Activated T-helper 1 cell treated with anti-CD3 and anti-CD28 coated beads, Interleukin-12 subunit alpha, Interleukin-12 subunit beta, Interleukin-2, Interleukin-4 antibody, amounts not matched to agents 30 ng/mL and 10 ng/mL and 1 ng/mL, durations not matched to agents 14 hours and 24 hours and 36 hours (primary cell): ENCODE measurements at regions of chr2 and their contacts with region 1.

Region 1: GRCh38 chr2:12416600-12416999 is 300.1 kb upstream of the TRIB2 start:
- DNase-seq: peak; percentile 41
- H3K4me3 Mint-ChIP-seq: no peak overlapping the region
- H3K27ac Mint-ChIP-seq: no peak overlapping the region
- H3K4me1 Mint-ChIP-seq: peaks cover 65% of the 10 kb centered on the region
- H3K27me3 Mint-ChIP-seq: peaks cover 2% of the 10 kb centered on the region

Region 2: GRCh38 chr2:11743846-11744553 is 672.6 kb before region 1 on chr2:
- intact Hi-C with region 1: loop called (anchors 10 kb)
- DNase-seq: peak; percentile 67
- H3K4me3 Mint-ChIP-seq: peak overlapping the region; percentile 0
- H3K27ac Mint-ChIP-seq: peak overlapping the region; percentile 79
- H3K4me1 Mint-ChIP-seq: peaks cover 55% of the 10 kb centered on the region
- H3K27me3 Mint-ChIP-seq: peaks cover 3% of the 10 kb centered on the region

Region 3: DNA sequence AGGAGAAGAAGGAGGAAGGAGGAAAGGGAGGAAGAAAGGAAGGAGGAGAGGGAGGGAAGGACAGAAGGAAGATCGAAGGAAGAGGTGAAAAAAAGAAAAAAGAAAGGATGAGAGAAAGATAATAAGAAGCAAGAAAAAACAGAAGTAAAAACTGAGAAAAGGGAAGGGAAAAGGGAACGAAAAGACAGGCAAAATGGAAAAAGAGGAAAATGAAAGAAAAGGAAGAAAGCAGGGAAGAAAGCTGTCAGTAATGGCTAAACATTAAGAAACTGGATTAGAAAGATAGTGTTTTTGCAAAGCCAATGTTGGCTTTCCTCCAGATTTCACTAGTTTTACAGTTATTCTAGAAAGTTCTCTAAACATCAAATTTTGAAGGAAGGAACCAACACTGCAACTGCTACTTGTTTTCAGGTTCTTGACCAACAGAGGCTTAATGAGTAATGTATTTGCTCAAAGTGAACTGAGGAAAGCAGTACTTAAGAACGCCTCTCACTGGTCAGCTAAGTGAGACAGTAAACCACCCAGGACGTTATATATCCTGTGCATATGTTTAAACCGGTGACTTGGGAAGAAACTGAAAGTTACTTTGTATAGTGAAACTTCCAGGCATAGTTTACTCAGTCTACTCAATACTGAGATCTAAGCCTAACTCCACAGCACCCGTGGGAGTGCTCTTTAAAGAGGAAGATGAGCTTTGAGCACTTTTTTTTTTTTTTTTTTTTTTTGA is 14.0 kb after region 1 on chr2:
- intact Hi-C with region 1: loop called (anchors 1 kb)
- DNase-seq: peak; percentile 8
- H3K4me3 Mint-ChIP-seq: peak overlapping the region; percentile 58
- H3K27ac Mint-ChIP-seq: peak overlapping the region; percentile 74
- H3K4me1 Mint-ChIP-seq: peaks cover 55% of the 10 kb centered on the region
- H3K27me3 Mint-ChIP-seq: no peaks in the 10 kb centered on the region

Region 4: GRCh38 chr2:12856934-12857601 is 440.5 kb after region 1 on chr2:
- intact Hi-C with region 1: loop called (anchors 5 kb)
- DNase-seq: peak; percentile 26
- H3K4me3 Mint-ChIP-seq: no peak overlapping the region
- H3K27ac Mint-ChIP-seq: no peak overlapping the region
- H3K4me1 Mint-ChIP-seq: peaks cover 18% of the 10 kb centered on the region
- H3K27me3 Mint-ChIP-seq: no peaks in the 10 kb centered on the region

Region 5: GRCh38 chr2:13006829-13007717 is 590.5 kb after region 1 on chr2:
- intact Hi-C with region 1: loop called (anchors 5 kb)
- DNase-seq: peak; percentile 39
- H3K4me3 Mint-ChIP-seq: no peak overlapping the region
- H3K27ac Mint-ChIP-seq: no peak overlapping the region
- H3K4me1 Mint-ChIP-seq: no peaks in the 10 kb centered on the region
- H3K27me3 Mint-ChIP-seq: peaks cover 32% of the 10 kb centered on the region